Ascending aorta (tissue), 2 donors: ENCODE measurements at regions of chr10 and their contacts with region 1.

Region 1: GRCh38 chr10:31928549-31929260 is at the start of gene ARHGAP12:
- DNase-seq: peak; percentile 72 to 94
- H3K4me3 ChIP-seq: peak within 1 kb of the TSS; percentile 85 to 98
- H3K27ac ChIP-seq: peak within 1 kb of the TSS; percentile 95 to 96
- H3K4me1 ChIP-seq: peaks cover 0 to 19% of the 10 kb centered on the region in 2 donors
- H3K27me3 ChIP-seq: no peaks in the 10 kb centered on the region
- CTCF ChIP-seq: no peak
- total RNA-seq, gene ARHGAP12: 11.4 TPM

Region 2: DNA sequence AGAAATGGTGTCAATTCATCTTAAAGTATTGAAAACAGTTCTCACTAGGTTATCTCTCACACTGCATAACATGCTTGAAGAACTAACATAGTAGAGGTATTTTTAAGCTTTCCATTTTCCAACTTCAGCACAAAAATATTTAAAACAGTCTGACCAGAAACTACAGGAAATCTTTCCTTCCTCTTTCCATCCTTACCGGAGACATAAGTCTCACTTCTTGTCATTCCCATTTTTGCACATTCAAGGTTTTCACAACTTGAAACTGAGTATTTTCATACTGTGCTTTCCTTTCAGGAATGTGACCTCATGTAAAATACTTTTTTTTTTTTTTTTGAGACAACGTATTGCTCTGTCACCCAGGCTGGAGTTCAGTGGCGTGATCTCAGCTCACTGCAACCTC is 45.3 kb before region 1 on chr10:
- intact Hi-C with region 1: loop called (anchors 5 kb)
- DNase-seq: no peak
- H3K4me3 ChIP-seq: peak overlapping the region in 1 of 2 donors; percentile 30
- H3K27ac ChIP-seq: peak overlapping the region; percentile 17 to 56
- H3K4me1 ChIP-seq: peaks cover 0 to 9% of the 10 kb centered on the region in 2 donors
- H3K27me3 ChIP-seq: no peaks in the 10 kb centered on the region
- CTCF ChIP-seq: no peak

Region 3: DNA sequence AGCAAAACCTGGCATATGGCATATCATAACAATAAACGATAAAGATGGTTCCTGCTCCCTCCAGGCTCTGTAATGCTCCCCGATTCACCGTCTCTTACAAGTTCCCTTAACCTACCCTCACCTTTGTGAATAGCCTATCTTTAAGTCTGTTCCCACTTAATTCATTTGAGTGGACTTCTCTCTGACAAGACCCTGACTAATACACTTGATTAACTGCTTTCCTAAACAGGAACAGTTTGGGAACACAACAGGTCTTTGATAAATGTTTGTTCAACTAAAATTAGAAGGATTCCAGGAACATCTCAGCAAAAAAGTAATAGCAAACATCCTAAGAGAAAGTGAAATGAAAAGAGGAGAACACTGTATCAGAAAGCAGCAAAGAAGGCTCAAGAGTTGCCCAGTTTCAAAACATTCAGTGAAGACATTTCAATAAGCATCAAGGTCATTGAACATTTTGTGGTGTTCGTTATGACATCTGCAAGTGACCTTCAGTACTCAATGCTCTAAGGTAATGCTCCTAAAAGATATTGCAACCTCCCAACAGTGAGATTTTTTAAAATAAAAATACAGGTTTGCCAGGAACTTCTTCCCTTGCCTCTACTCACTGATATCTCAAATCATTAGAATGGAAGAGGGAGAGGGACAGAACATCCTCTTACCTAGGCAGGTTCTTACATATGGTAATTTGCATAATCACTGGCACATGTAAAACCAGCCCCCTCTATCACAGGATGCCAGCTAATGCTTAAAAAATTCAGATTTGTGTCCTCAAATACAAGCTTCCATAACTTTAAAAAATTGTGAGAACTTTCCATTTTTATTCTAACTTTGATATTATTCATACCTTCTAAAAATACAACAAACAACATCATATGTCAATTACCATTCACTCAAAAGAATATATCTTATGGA is 11.3 kb after region 1 on chr10:
- intact Hi-C with region 1: loop called (anchors 1 kb)
- DNase-seq: no peak
- H3K4me3 ChIP-seq: no peak overlapping the region
- H3K27ac ChIP-seq: peak overlapping the region in 1 of 2 donors; percentile 43
- H3K4me1 ChIP-seq: peaks cover 0 to 3% of the 10 kb centered on the region in 2 donors
- H3K27me3 ChIP-seq: no peaks in the 10 kb centered on the region
- CTCF ChIP-seq: no peak

Region 4: DNA sequence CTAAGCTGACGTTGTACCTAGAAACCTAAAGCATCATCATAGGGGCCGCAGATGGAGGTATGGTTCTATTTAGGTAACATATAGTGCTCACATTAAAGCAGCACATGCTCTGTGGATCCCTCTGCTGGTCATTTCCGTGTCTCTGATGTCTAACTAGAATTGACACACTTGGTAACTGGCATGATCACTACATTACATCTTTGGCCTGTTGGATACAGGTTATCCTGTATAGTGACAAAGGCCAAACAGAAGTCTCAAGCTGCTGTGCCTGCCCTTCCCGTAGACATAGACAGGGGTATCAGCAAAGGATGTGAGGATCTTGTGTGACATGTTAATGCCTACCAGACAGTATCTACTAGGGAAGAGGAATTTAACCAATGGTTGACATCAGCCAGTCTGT is 76.3 kb after region 1 on chr10:
- intact Hi-C with region 1: loop called (anchors 5 kb)
- DNase-seq: peak in 1 of 2 donors; percentile 67
- H3K4me3 ChIP-seq: no peak overlapping the region
- H3K27ac ChIP-seq: peak overlapping the region in 1 of 2 donors; percentile 32
- H3K4me1 ChIP-seq: no peaks in the 10 kb centered on the region
- H3K27me3 ChIP-seq: no peaks in the 10 kb centered on the region
- CTCF ChIP-seq: peak; percentile 37 to 47 (median 41)